ENCODE measurements at regions of chr15 and their contacts with region 1.

Region 1: DNA sequence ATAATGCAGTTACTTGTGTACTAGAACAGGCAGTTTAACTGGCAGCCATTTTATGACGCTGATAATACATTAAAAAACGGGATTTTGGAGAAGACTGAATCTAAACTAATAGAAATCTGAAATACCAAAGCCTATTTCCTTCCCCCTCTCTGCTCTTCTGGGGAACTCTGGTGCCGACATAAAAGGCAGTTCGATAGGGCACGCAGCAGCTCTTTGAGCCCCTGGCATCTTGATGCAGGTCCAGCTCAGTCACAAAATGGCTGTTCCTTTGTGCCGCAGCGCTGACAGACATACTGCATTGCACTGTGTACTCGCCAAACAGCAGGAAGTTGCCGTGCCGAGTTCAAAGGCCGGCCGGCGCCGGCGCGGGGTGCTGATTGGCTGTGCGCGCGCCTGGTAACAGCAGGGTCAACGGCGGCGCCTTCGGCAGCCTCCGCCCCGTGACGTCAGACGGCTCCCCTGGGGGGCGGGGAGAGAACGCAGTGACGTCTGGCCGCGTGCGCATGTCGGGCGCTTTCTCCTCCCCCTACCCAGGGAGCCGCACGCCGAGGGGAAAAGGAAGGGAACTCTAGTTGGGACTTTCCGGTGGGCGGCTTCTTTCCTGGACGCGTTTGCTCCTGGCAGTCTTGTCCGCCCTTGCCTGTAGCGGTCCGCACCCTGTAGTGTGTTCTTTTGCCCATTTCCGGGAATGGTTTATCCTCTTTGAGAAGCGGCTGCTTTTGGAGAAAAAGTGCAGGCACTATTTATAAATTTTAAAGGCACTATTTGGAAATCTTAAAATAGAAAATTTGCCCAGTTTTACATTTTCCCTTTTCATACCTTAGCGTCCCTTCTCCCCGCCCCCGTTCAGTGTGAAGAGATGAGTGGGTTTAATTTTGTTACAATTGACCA is 4.1 kb downstream of the CHD2 start:
- DNase-seq: peak; percentile 100
- ATAC-seq: peak; percentile 80
- H3K4me3 Mint-ChIP-seq: peak overlapping the region; percentile 81
- H3K27ac Mint-ChIP-seq: peak overlapping the region; percentile 98
- H3K4me1 Mint-ChIP-seq: peaks cover 48% of the 10 kb centered on the region
- H3K27me3 Mint-ChIP-seq: no peaks in the 10 kb centered on the region

Region 2: DNA sequence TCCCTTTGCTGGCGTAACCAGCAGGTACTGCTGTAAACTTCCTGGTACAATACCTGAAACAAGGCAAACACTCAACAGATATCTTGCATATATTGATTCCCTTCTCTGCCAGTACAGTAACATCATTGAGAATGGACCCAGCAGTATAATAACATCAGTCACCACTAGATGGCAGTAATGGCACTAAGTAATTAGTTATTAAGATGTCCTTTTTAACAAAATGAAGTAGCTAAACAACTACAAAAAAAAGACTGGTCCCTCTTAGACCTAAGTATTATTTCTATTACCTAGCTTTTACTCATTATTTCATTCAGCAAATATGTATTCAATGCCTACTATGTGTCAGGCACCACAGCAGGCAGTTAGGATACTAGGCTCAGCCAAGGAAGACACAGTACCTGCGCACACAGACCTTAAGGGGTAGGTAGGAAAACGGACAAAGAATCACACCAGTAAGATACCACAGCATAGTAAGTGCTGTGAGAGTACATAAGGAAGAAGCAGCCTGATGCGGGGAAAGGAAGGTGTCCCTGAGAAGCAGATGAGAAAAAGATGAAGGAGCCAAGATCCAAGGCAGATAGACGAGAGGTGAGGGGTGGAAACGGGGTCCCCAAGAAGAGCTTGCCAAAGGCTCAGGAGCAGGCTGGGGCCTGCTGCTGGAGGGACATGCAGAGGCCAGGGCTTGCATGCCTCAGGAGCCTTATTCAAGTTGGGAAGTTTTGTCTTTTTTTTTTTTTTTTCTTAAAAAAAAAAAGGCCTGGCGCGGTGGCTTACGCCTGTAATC is 106.8 kb before region 1 on chr15:
- CTCF ChIA-PET with region 1: interaction called, 24 read pairs
- POLR2A ChIA-PET with region 1: interaction called, 4 read pairs
- intact Hi-C with region 1: no loop called
- DNase-seq: no peak
- ATAC-seq: peak; percentile 90
- H3K4me3 Mint-ChIP-seq: no peak overlapping the region
- H3K27ac Mint-ChIP-seq: peak overlapping the region; percentile 65
- H3K4me1 Mint-ChIP-seq: peaks cover 8% of the 10 kb centered on the region
- H3K27me3 Mint-ChIP-seq: no peaks in the 10 kb centered on the region

Region 3: GRCh38 chr15:92808978-92809879 is 95.0 kb before region 1 on chr15:
- CTCF ChIA-PET with region 1: interaction called, 80 read pairs
- POLR2A ChIA-PET with region 1: interaction called, 36 read pairs
- intact Hi-C with region 1: loop called (anchors 1 kb)
- DNase-seq: peak; percentile 99
- ATAC-seq: peak; percentile 82
- H3K4me3 Mint-ChIP-seq: peak overlapping the region; percentile 88
- H3K27ac Mint-ChIP-seq: peak overlapping the region; percentile 99
- H3K4me1 Mint-ChIP-seq: peaks cover 43% of the 10 kb centered on the region
- H3K27me3 Mint-ChIP-seq: no peaks in the 10 kb centered on the region

Region 4: GRCh38 chr15:92831655-92832328 is 72.4 kb before region 1 on chr15:
- CTCF ChIA-PET with region 1: interaction called, 13 read pairs
- POLR2A ChIA-PET with region 1: interaction called, 25 read pairs
- intact Hi-C with region 1: loop called (anchors 1 kb)
- DNase-seq: peak; percentile 96
- ATAC-seq: peak; percentile 95
- H3K4me3 Mint-ChIP-seq: peak overlapping the region; percentile 65
- H3K27ac Mint-ChIP-seq: peak overlapping the region; percentile 96
- H3K4me1 Mint-ChIP-seq: peaks cover 58% of the 10 kb centered on the region
- H3K27me3 Mint-ChIP-seq: no peaks in the 10 kb centered on the region

Region 5: DNA sequence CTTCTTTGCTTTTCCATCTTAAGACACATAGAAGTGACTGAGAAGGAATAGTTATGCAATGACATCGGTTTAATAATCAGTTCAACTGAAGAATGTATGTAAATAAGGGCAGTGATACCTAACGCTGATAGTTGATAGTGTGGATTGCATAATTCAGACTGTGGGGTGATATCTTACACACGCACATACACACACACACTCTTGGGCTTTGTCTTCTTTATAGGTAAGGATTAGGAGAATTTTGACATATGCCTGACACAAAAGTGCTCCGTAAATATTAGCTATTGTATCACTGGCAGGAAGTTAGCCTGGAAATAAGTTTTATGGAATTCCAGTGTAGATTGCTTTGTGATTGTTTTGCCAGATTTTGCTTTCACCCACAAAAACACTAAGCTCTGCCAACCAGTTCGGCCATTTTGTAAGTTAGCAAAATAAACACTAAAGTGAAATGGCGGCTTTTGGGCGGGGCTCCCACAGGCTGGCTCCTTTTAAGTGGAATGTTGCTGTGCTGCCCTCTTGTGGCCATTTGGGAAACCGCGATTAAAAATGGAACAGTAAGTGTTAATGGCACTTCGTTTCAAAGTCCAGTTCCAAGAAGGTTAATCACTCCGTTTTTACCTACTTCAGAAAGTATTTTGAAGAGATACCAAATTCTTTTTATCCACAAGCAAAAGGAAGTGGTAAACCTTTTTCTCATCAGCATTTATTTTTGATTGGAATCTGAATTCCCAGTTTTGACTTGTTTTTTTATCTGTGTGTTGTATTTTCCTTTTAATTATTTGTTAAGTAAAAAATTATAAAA is 13.6 kb after region 1 on chr15:
- CTCF ChIA-PET with region 1: interaction called, 33 read pairs
- POLR2A ChIA-PET with region 1: interaction called, 28 read pairs
- intact Hi-C with region 1: loop called (anchors 1 kb)
- DNase-seq: peak; percentile 96
- ATAC-seq: peak; percentile 10
- H3K4me3 Mint-ChIP-seq: peak overlapping the region; percentile 20
- H3K27ac Mint-ChIP-seq: peak overlapping the region; percentile 84
- H3K4me1 Mint-ChIP-seq: peaks cover 86% of the 10 kb centered on the region
- H3K27me3 Mint-ChIP-seq: no peaks in the 10 kb centered on the region

Measured in activated CD4-positive, alpha-beta T cell treated with anti-CD3 and anti-CD28 coated beads for 36 hours (primary cell).